MCF 10A (cell line): ENCODE measurements at regions of chr11 and their contacts with region 1.

Region 1: DNA sequence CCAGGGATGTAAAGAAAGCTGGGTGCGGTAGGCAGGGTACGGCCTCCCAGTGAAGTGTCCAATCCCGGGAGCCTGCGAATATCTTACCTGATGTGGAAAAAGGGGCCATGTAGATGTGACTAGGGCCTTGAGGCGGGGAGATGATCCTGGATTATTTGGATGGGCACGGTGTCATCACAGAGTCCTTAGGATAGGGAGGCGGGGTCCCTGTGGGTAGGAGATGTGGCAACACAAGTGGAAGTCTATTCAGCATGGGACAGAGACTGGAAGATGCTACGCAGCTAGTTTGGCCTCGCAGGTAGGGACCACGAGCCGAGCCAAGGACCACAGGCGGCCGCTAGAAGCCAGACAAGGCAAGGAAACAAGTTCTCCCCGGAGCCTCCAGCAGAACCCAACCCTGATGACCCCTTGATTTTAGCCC is 46.4 kb upstream of the SHANK2 start:
- DNase-seq: no peak
- H3K4me3 Mint-ChIP-seq: peak overlapping the region; percentile 56
- H3K27ac Mint-ChIP-seq: peak overlapping the region; percentile 97
- H3K4me1 Mint-ChIP-seq: peaks cover 21% of the 10 kb centered on the region
- H3K27me3 Mint-ChIP-seq: no peaks in the 10 kb centered on the region
- CTCF ChIP-seq: no peak

Region 2: GRCh38 chr11:71240865-71241691 is 57.7 kb before region 1 on chr11:
- CTCF ChIA-PET with region 1: no interaction called
- POLR2A ChIA-PET with region 1: no interaction called
- intact Hi-C with region 1: no loop called
- DNase-seq: peak; percentile 92
- H3K4me3 Mint-ChIP-seq: peak overlapping the region; percentile 61
- H3K27ac Mint-ChIP-seq: peak overlapping the region; percentile 78
- H3K4me1 Mint-ChIP-seq: peaks cover 11% of the 10 kb centered on the region
- H3K27me3 Mint-ChIP-seq: no peaks in the 10 kb centered on the region
- CTCF ChIP-seq: no peak

Region 3: GRCh38 chr11:71286701-71287643 is 11.8 kb before region 1 on chr11:
- CTCF ChIA-PET with region 1: interaction called, 3 read pairs
- POLR2A ChIA-PET with region 1: interaction called, 26 read pairs
- intact Hi-C with region 1: no loop called
- DNase-seq: peak; percentile 74
- H3K4me3 Mint-ChIP-seq: peak overlapping the region; percentile 55
- H3K27ac Mint-ChIP-seq: no peak overlapping the region
- H3K4me1 Mint-ChIP-seq: peaks cover 16% of the 10 kb centered on the region
- H3K27me3 Mint-ChIP-seq: no peaks in the 10 kb centered on the region
- CTCF ChIP-seq: no peak